CD4-positive, alpha-beta T cell (primary cell): ENCODE measurements at regions of chr12 and their contacts with region 1.

Region 1: GRCh38 chr12:108514973-108515814 is at the start of gene FICD:
- DNase-seq: peak; percentile 96 to 100 (median 99)
- ATAC-seq: peak; percentile 93
- H3K4me3 ChIP-seq: peak within 1 kb of the TSS; percentile 99
- H3K4me3 Mint-ChIP-seq: peak within 1 kb of the TSS; percentile 96
- H3K27ac ChIP-seq: peak within 1 kb of the TSS; percentile 70 to 71
- H3K27ac Mint-ChIP-seq: peak within 1 kb of the TSS; percentile 87
- H3K4me1 ChIP-seq: peaks cover 34% of the 10 kb centered on the region
- H3K4me1 Mint-ChIP-seq: peaks cover 29% of the 10 kb centered on the region
- H3K27me3 ChIP-seq: no peaks in the 10 kb centered on the region
- H3K27me3 Mint-ChIP-seq: no peaks in the 10 kb centered on the region
- CTCF ChIP-seq: no peak
- total RNA-seq, gene FICD: 2.7 to 3.2 TPM

Region 2: GRCh38 chr12:107670999-107671643 is 844.1 kb before region 1 on chr12:
- CTCF ChIA-PET with region 1: no interaction called
- POLR2A ChIA-PET with region 1: interaction called, 3 read pairs
- intact Hi-C with region 1: loop called (anchors 1 to 2 kb)
- DNase-seq: peak in 7 of 14 experiments; percentile 6 to 60 (median 23)
- ATAC-seq: no peak
- H3K4me3 ChIP-seq: no peak overlapping the region
- H3K4me3 Mint-ChIP-seq: no peak overlapping the region
- H3K27ac ChIP-seq: no peak overlapping the region
- H3K27ac Mint-ChIP-seq: no peak overlapping the region
- H3K4me1 ChIP-seq: no peaks in the 10 kb centered on the region
- H3K4me1 Mint-ChIP-seq: peaks cover 6% of the 10 kb centered on the region
- H3K27me3 ChIP-seq: no peaks in the 10 kb centered on the region
- H3K27me3 Mint-ChIP-seq: peaks cover 24% of the 10 kb centered on the region
- CTCF ChIP-seq: peak; percentile 43

Region 3: GRCh38 chr12:107917912-107918800 is 597.0 kb before region 1 on chr12:
- CTCF ChIA-PET with region 1: no interaction called
- POLR2A ChIA-PET with region 1: no interaction called
- intact Hi-C with region 1: loop called (anchors 5 kb)
- DNase-seq: peak in 2 of 14 experiments; percentile 11 to 18
- ATAC-seq: no peak
- H3K4me3 ChIP-seq: no peak overlapping the region
- H3K4me3 Mint-ChIP-seq: no peak overlapping the region
- H3K27ac ChIP-seq: no peak overlapping the region
- H3K27ac Mint-ChIP-seq: no peak overlapping the region
- H3K4me1 ChIP-seq: no peaks in the 10 kb centered on the region
- H3K4me1 Mint-ChIP-seq: no peaks in the 10 kb centered on the region
- H3K27me3 ChIP-seq: peaks cover 3 to 19% of the 10 kb centered on the region in 2 experiments
- H3K27me3 Mint-ChIP-seq: peaks cover 69% of the 10 kb centered on the region
- CTCF ChIP-seq: no peak

Region 4: DNA sequence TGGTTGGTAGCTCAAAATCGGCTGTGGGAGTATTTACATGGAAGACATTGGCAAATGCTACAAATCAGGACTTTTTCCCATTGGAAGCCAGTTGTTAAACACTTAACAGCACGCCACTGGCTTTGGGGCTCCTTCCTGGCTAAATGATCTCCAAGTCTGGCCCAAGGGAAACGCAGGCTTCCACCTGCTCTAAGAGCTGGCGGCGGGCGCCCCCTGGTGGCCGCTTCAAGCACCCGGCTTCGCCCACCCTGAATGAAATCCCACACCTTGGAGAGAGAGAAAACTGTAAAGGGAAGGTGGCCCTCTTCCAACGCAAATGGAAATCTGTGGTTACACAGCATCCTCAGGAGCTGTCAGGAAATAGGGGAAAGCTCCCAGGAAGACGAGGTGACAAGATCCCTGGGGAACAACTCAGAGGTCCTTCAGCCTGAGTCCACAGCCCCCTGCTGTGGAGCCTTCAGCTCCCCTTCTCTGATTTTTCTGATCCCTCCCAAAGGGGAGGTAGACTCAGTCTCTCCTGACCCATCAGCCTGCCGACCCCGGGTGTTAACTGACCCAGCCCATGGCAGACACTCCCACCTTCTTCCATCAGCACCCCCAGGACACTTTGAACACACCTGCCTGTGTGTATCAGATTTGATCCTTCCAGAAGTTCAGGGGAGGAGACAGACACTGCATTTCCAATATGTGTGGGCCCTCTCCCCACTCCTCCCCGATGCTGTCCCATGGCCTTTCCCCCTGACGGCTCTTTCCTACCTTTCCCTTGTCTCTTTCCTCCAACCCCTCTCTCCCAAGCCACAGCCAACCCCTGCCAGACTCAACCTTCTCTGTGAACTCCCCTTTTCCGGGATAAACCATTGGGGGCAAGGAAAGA is 103.1 kb after region 1 on chr12:
- CTCF ChIA-PET with region 1: no interaction called
- POLR2A ChIA-PET with region 1: interaction called, 3 read pairs
- intact Hi-C with region 1: loop called in 1 of 2 experiments (anchors 5 kb)
- DNase-seq: peak; percentile 61 to 89 (median 72)
- ATAC-seq: peak; percentile 54
- H3K4me3 ChIP-seq: no peak overlapping the region
- H3K4me3 Mint-ChIP-seq: peak overlapping the region; percentile 30
- H3K27ac ChIP-seq: peak overlapping the region; percentile 49 to 80
- H3K27ac Mint-ChIP-seq: peak overlapping the region; percentile 84
- H3K4me1 ChIP-seq: peaks cover 63% of the 10 kb centered on the region
- H3K4me1 Mint-ChIP-seq: peaks cover 59% of the 10 kb centered on the region
- H3K27me3 ChIP-seq: no peaks in the 10 kb centered on the region
- H3K27me3 Mint-ChIP-seq: no peaks in the 10 kb centered on the region
- CTCF ChIP-seq: peak; percentile 98

Region 5: DNA sequence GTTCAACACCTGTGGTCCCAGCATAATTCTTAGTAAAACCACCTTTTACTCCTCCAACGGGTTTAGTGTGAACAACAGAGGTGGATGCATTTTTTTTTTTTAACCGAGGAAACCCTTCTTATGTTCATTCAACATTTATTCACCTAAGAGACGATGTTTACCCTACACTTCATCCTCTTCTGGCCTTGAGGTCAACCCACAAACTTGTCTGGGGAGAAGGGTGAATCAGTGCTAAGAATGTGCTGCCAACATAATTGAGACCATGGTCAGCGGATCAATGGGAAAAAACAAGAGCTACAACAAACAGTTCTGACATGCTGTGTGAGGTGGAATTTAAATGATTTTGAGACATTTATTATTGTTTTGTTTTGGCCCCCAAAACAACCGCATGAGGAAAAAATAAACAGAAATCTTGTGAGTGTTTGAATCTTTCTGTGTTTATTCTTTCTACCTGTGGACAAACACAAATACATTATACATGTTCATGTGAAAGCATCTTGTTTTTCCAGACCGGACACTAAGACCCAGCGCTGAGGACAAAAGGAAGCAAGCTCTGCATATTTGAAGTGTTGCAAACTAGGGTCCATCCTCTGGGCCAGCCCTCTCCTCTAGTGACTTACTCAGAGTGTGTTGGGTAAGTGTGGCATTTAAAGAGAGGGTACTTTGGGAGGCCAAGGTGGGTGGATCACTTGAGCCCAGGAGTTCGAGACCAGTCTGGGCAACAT is 532.0 kb after region 1 on chr12:
- CTCF ChIA-PET with region 1: no interaction called
- POLR2A ChIA-PET with region 1: no interaction called
- intact Hi-C with region 1: loop called in 1 of 2 experiments (anchors 5 kb)
- DNase-seq: no peak
- ATAC-seq: no peak
- H3K4me3 ChIP-seq: no peak overlapping the region
- H3K4me3 Mint-ChIP-seq: no peak overlapping the region
- H3K27ac ChIP-seq: no peak overlapping the region
- H3K27ac Mint-ChIP-seq: no peak overlapping the region
- H3K4me1 ChIP-seq: peaks cover 5% of the 10 kb centered on the region
- H3K4me1 Mint-ChIP-seq: peaks cover 5% of the 10 kb centered on the region
- H3K27me3 ChIP-seq: peaks cover 3 to 6% of the 10 kb centered on the region in 2 experiments
- H3K27me3 Mint-ChIP-seq: peaks cover 11% of the 10 kb centered on the region
- CTCF ChIP-seq: no peak

Region 6: DNA sequence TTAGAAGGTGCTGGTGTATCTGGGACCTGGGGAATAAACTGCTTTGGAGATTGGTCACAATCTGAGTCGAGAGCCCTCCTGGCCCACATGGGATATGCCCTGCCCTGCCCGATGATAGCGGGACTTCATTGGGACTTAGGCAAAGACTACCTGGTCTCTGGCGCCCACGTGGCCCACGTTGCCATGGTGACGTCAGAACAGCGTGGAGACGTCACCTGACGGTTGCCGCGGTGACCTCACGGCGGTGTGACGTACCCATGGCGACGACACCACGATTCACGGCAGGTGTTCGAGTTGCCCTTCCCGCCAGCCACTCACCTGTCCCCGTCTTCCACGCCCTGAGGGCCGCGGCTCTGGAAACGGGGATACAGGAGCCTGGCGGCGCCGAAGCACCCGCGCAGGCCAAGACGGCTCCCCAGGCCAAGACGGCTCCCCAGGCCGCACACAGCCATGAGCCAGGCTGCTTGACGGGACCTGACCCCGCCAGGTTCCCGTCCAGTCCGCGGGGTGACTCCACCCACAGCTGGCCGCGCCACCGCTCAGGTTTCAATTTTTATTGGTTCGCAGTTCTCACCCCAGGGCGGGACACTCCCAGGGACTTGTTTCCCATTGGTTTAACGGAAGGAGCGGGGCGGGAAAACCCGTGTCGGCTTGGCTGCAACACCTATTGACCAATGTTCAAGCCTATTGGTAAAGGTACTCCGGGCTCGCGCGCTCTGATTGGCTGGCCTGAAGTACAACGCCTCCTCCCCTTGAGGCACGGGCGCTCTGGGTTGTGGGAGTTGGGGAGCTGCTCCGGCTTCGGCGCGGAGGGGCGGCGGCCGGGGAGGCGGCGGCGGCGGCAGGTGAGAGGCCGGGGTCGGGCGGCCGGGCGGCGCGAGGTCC is 1058.1 kb after region 1 on chr12 and contains the starts of genes MMAB and MVK:
- CTCF ChIA-PET with region 1: no interaction called
- POLR2A ChIA-PET with region 1: no interaction called
- intact Hi-C with region 1: loop called in 1 of 2 experiments (anchors 10 kb)
- DNase-seq: peak; percentile 95 to 100 (median 98)
- ATAC-seq: peak; percentile 91
- H3K4me3 ChIP-seq: peak within 1 kb of the TSS; percentile 78
- H3K4me3 Mint-ChIP-seq: peak within 1 kb of the TSS; percentile 99
- H3K27ac ChIP-seq: peak within 1 kb of the TSS; percentile 83 to 96
- H3K27ac Mint-ChIP-seq: peak within 1 kb of the TSS; percentile 95
- H3K4me1 ChIP-seq: peaks cover 19% of the 10 kb centered on the region
- H3K4me1 Mint-ChIP-seq: peaks cover 29% of the 10 kb centered on the region
- H3K27me3 ChIP-seq: no peaks in the 10 kb centered on the region
- H3K27me3 Mint-ChIP-seq: no peaks in the 10 kb centered on the region
- CTCF ChIP-seq: no peak
- total RNA-seq, gene MMAB: 8.6 to 9.2 TPM
- total RNA-seq, gene MVK: 8.2 to 8.4 TPM